CD14-positive monocyte (primary cell): ENCODE measurements at regions of chr12 and their contacts with region 1.

Region 1: GRCh38 chr12:89524541-89525285 is at the start of gene GALNT4:
- DNase-seq: peak; percentile 80 to 86 (median 85)
- H3K4me3 ChIP-seq: peak within 1 kb of the TSS; percentile 80 to 91 (median 90)
- H3K4me3 Mint-ChIP-seq: peak within 1 kb of the TSS; percentile 98 to 99
- H3K27ac ChIP-seq: peak within 1 kb of the TSS; percentile 79 to 85
- H3K27ac Mint-ChIP-seq: peak within 1 kb of the TSS; percentile 89 to 96 (median 94)
- H3K4me1 ChIP-seq: peaks cover 37 to 52% of the 10 kb centered on the region in 2 donors
- H3K4me1 Mint-ChIP-seq: peaks cover 54% of the 10 kb centered on the region
- H3K27me3 ChIP-seq: no peaks in the 10 kb centered on the region
- H3K27me3 Mint-ChIP-seq: no peaks in the 10 kb centered on the region
- CTCF ChIP-seq: peak; percentile 70
- polyA plus RNA-seq, gene GALNT4: 3.7 to 12.9 (median 10.7) TPM

Region 2: DNA sequence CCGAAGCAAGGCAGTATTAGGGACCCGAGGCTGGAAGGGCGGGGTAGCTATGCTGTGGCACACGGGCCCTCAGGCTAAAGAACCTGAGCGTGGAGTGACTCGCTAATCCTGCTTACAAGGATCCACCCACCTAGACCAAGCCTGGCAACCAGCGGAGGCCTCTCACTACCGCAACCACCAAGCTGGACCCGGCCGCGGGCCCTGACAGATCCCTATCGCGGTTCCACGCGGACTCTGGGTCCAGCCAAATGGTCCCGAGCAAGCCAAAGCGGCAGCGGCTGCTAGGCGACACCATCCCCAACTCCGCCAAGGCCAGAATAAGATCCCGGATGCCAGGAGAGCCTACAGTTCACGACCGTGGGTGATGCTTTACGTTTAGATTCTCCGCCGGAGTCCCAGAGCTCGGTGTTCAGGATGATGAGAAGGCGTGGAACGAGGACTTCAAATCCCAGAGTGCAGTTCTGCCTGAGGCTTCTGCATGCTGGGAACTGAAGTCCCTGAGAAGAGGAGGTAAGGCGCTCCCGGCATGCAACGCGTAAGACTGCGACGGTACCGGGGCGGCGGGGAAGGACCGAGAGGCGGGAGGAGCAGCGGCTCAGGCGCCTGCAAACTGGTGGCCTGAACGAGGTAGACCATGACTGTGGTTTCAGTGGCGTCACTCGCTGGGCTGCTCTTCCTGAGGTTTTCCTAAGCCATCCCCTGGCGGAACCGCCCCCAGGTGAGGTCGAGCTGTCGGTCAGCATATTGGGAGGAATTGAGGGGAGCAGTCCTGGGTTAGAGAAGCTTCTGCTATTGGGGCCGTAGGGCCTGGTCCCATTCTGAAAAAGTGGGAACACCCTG is 1382.7 kb before region 1 on chr12 and contains the starts of genes CEP290 and TMTC3:
- intact Hi-C with region 1: loop called in 1 of 2 experiments (anchors 10 kb)
- DNase-seq: peak; percentile 93 to 96 (median 94)
- H3K4me3 ChIP-seq: peak within 1 kb of the TSS; percentile 54 to 88 (median 65)
- H3K4me3 Mint-ChIP-seq: peak within 1 kb of the TSS; percentile 88 to 93
- H3K27ac ChIP-seq: peak within 1 kb of the TSS; percentile 38 to 71
- H3K27ac Mint-ChIP-seq: peak within 1 kb of the TSS; percentile 80 to 95 (median 89)
- H3K4me1 ChIP-seq: peaks cover 14 to 20% of the 10 kb centered on the region in 2 donors
- H3K4me1 Mint-ChIP-seq: peaks cover 18% of the 10 kb centered on the region
- H3K27me3 ChIP-seq: no peaks in the 10 kb centered on the region
- H3K27me3 Mint-ChIP-seq: no peaks in the 10 kb centered on the region
- CTCF ChIP-seq: no peak
- polyA plus RNA-seq, gene CEP290: 0.55 to 1.5 (median 0.71) TPM
- polyA plus RNA-seq, gene TMTC3: 1.1 to 2.2 (median 1.2) TPM

Region 3: DNA sequence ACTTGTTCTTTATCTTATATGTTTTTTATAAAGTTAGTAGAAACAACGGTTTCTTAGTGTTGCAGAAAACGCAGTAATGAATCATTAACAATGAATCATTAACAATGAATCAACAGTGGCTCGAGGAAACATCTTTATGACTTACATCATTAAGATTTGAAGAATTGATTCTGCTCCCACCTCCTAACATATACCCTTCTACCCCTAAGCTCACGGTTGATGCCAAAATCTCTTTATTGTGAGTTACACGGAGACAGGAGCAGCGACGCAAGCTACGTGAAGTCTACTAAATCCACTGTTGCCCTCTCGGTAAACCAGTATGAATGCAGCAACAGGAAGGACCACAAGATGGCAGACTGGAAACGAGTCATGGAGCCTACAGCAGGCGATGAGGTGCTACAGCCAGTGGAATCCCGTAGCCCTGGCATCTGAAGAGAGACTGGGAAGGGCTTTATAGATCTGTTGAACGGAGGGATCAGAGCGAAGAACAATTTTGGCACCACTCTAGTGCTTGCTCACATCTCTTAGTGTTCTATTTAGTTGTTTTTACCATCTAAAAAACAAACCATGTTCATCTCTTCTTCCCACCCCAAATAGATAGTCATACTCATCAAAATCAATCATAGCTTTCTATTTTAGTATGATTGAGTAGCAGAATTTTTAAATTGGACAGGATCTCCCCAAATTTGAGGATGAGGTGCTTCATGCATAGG is 505.1 kb before region 1 on chr12:
- intact Hi-C with region 1: loop called (anchors 2 to 5 kb)
- DNase-seq: peak; percentile 53 to 69 (median 68)
- H3K4me3 ChIP-seq: peak overlapping the region in 1 of 3 experiments; percentile 52
- H3K4me3 Mint-ChIP-seq: no peak overlapping the region
- H3K27ac ChIP-seq: no peak overlapping the region
- H3K27ac Mint-ChIP-seq: no peak overlapping the region
- H3K4me1 ChIP-seq: peaks cover 7 to 10% of the 10 kb centered on the region in 2 donors
- H3K4me1 Mint-ChIP-seq: peaks cover 2% of the 10 kb centered on the region
- H3K27me3 ChIP-seq: peaks cover 0 to 2% of the 10 kb centered on the region in 2 donors
- H3K27me3 Mint-ChIP-seq: peaks cover 0 to 9% (median 5%) of the 10 kb centered on the region in 3 donors
- CTCF ChIP-seq: peak; percentile 86

Region 4: GRCh38 chr12:89470741-89471509 is 53.8 kb before region 1 on chr12:
- intact Hi-C with region 1: loop called (anchors 5 to 10 kb)
- DNase-seq: peak in 2 of 3 donors; percentile 28 to 44
- H3K4me3 ChIP-seq: no peak overlapping the region
- H3K4me3 Mint-ChIP-seq: no peak overlapping the region
- H3K27ac ChIP-seq: no peak overlapping the region
- H3K27ac Mint-ChIP-seq: no peak overlapping the region
- H3K4me1 ChIP-seq: peaks cover 12 to 17% of the 10 kb centered on the region in 2 donors
- H3K4me1 Mint-ChIP-seq: peaks cover 20% of the 10 kb centered on the region
- H3K27me3 ChIP-seq: no peaks in the 10 kb centered on the region
- H3K27me3 Mint-ChIP-seq: no peaks in the 10 kb centered on the region
- CTCF ChIP-seq: peak; percentile 73